Activated CD8-positive, alpha-beta memory T cell treated with anti-CD3 and anti-CD28 coated beads, Interleukin-2, amount 10 ng/mL, durations not matched to agents 7 days and 5 days (primary cell): ENCODE measurements at regions of chr6 and their contacts with region 1.

Region 1: GRCh38 chr6:34671801-34672656 is 24.5 kb downstream of the ILRUN start:
- DNase-seq: peak; percentile 91
- ATAC-seq: peak; percentile 99
- H3K4me3 Mint-ChIP-seq: peak overlapping the region; percentile 68
- H3K27ac Mint-ChIP-seq: peak overlapping the region; percentile 91
- H3K4me1 Mint-ChIP-seq: peaks cover 42% of the 10 kb centered on the region
- H3K27me3 Mint-ChIP-seq: no peaks in the 10 kb centered on the region

Region 2: GRCh38 chr6:34656378-34657036 is 15.5 kb before region 1 on chr6:
- CTCF ChIA-PET with region 1: interaction called, 17 read pairs
- DNase-seq: peak; percentile 61
- ATAC-seq: peak; percentile 85
- H3K4me3 Mint-ChIP-seq: peak overlapping the region; percentile 81
- H3K27ac Mint-ChIP-seq: peak overlapping the region; percentile 98
- H3K4me1 Mint-ChIP-seq: peaks cover 48% of the 10 kb centered on the region
- H3K27me3 Mint-ChIP-seq: no peaks in the 10 kb centered on the region